ENCODE measurements at regions of chr17 and their contacts with region 1.

Region 1: DNA sequence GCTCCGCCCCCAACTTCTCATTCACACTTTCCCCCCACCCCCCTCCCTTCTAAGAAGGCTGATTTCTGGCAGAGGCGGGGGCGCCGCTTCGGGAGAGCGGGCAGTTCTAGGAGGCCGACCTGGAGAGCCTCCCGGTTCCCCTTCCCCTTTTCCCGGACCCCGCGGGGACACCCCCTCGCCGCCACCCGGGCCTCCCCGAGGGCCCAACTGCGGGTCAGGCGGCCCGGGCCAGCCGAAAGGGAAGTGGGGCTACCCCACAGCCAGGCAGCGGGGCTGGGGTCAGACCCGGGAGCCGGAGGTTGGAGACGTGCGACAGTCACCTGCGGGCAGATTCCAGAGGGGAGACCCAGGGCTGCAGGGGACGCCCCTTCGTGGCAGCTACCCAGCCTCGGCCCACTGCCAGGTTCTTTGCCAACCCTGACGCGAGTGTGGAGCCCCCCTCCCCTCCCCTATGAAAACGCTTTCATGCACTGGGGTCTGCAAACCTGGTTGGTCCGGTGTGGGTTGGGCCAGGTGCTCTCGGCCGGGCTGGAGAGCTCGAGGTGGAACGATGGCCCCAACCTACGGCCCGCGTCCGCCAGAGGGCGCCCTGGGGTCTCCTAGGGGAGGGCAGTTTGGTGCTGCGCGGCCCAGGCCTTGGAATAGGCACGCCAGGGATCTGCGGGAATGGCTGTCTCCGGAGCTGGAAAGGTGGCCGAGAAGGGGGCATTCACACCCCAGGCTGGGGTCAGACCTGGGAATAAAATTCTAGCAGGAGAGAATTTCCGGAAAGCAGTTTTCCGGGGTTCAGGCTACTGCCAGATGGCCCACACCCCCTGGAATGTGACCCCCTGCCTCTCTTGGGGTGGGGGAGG is 721 bp upstream of the SOCS3 start:
- DNase-seq: peak; percentile 97
- ATAC-seq: peak; percentile 41
- H3K4me3 Mint-ChIP-seq: peak overlapping the region; percentile 74
- H3K27ac Mint-ChIP-seq: peak overlapping the region; percentile 90
- H3K4me1 Mint-ChIP-seq: peaks cover 42% of the 10 kb centered on the region
- H3K27me3 Mint-ChIP-seq: peaks cover 3% of the 10 kb centered on the region

Region 2: DNA sequence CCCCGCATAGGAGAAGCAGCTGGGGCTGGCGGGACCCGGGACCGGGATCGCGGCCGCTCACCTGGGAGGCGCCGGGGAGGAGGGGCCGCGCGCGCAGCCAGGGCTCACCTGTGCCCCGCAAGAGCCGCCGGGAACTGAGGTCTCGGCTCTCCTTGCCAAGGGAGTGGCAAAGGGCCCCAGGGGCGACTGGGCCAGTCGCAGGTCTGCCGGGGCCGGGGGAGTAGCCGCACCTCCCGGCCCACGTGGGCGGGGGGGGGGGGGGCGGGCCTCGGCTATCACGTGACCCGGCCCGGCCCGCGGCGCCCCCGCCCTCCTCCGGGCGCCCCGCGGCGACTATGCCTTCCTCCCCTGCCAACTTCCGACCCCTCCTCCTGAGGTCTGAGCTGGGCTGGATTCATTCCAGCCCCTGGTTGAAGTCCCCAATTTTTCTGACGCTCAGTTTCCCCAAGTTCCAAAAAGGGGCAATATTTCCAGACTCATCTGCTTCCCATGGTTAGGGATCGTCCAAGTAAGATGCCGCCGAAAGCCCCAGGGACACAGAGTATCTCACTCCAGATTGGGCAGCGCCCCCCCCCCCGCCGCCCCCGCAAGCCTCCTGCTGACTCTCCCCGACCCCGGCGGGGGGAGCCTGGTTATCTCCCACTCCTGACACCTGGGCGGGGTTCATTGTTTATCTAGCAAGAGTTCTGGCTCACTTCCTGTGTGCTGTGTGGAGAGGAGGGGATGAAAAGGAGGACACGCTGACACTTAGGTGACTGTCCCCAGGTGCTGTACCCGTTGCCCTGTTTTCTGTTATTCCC is 231.8 kb before region 1 on chr17 and contains the start of gene TMC6:
- CTCF ChIA-PET with region 1: interaction called, 3 read pairs
- POLR2A ChIA-PET with region 1: no interaction called
- intact Hi-C with region 1: loop called in 1 of 2 experiments (anchors 1 kb)
- DNase-seq: peak; percentile 87
- ATAC-seq: peak; percentile 31
- H3K4me3 Mint-ChIP-seq: peak within 1 kb of the TSS; percentile 94
- H3K27ac Mint-ChIP-seq: peak within 1 kb of the TSS; percentile 96
- H3K4me1 Mint-ChIP-seq: peaks cover 52% of the 10 kb centered on the region
- H3K27me3 Mint-ChIP-seq: no peaks in the 10 kb centered on the region
- total RNA-seq, gene TMC6: 138 to 145 TPM

Region 3: GRCh38 chr17:78250891-78251794 is 109.5 kb before region 1 on chr17:
- CTCF ChIA-PET with region 1: interaction called, 5 read pairs
- POLR2A ChIA-PET with region 1: interaction called, 6 read pairs
- intact Hi-C with region 1: loop called (anchors 1 to 5 kb)
- DNase-seq: peak; percentile 94
- ATAC-seq: peak; percentile 70
- H3K4me3 Mint-ChIP-seq: peak overlapping the region; percentile 41
- H3K27ac Mint-ChIP-seq: peak overlapping the region; percentile 63
- H3K4me1 Mint-ChIP-seq: peaks cover 42% of the 10 kb centered on the region
- H3K27me3 Mint-ChIP-seq: no peaks in the 10 kb centered on the region

Region 4: GRCh38 chr17:78343187-78343542 is 17.4 kb before region 1 on chr17:
- CTCF ChIA-PET with region 1: interaction called, 9 read pairs
- POLR2A ChIA-PET with region 1: interaction called, 11 read pairs
- intact Hi-C with region 1: no loop called
- DNase-seq: peak; percentile 45
- ATAC-seq: peak; percentile 13
- H3K4me3 Mint-ChIP-seq: peak overlapping the region; percentile 55
- H3K27ac Mint-ChIP-seq: peak overlapping the region; percentile 89
- H3K4me1 Mint-ChIP-seq: peaks cover 74% of the 10 kb centered on the region
- H3K27me3 Mint-ChIP-seq: no peaks in the 10 kb centered on the region

Region 5: GRCh38 chr17:78421484-78422266 is 61.1 kb after region 1 on chr17:
- CTCF ChIA-PET with region 1: interaction called, 63 read pairs
- POLR2A ChIA-PET with region 1: interaction called, 8 read pairs
- intact Hi-C with region 1: loop called (anchors 1 to 2 kb)
- DNase-seq: peak; percentile 85
- ATAC-seq: peak; percentile 86
- H3K4me3 Mint-ChIP-seq: no peak overlapping the region
- H3K27ac Mint-ChIP-seq: peak overlapping the region; percentile 34
- H3K4me1 Mint-ChIP-seq: peaks cover 38% of the 10 kb centered on the region
- H3K27me3 Mint-ChIP-seq: no peaks in the 10 kb centered on the region

Region 6: GRCh38 chr17:78840725-78841611 is 480.4 kb after region 1 on chr17 and contains the start of gene USP36:
- CTCF ChIA-PET with region 1: no interaction called
- POLR2A ChIA-PET with region 1: no interaction called
- intact Hi-C with region 1: loop called in 1 of 2 experiments (anchors 1 kb)
- DNase-seq: peak; percentile 100
- ATAC-seq: peak; percentile 89
- H3K4me3 Mint-ChIP-seq: peak within 1 kb of the TSS; percentile 86
- H3K27ac Mint-ChIP-seq: peak within 1 kb of the TSS; percentile 96
- H3K4me1 Mint-ChIP-seq: peaks cover 44% of the 10 kb centered on the region
- H3K27me3 Mint-ChIP-seq: no peaks in the 10 kb centered on the region
- total RNA-seq, gene USP36: 90.1 to 92.5 TPM

Measured in activated CD4-positive, alpha-beta T cell treated with anti-CD3 and anti-CD28 coated beads for 36 hours (primary cell).